PC-9 (cell line): ENCODE measurements at regions of chr16 and their contacts with region 1.

Region 1: DNA sequence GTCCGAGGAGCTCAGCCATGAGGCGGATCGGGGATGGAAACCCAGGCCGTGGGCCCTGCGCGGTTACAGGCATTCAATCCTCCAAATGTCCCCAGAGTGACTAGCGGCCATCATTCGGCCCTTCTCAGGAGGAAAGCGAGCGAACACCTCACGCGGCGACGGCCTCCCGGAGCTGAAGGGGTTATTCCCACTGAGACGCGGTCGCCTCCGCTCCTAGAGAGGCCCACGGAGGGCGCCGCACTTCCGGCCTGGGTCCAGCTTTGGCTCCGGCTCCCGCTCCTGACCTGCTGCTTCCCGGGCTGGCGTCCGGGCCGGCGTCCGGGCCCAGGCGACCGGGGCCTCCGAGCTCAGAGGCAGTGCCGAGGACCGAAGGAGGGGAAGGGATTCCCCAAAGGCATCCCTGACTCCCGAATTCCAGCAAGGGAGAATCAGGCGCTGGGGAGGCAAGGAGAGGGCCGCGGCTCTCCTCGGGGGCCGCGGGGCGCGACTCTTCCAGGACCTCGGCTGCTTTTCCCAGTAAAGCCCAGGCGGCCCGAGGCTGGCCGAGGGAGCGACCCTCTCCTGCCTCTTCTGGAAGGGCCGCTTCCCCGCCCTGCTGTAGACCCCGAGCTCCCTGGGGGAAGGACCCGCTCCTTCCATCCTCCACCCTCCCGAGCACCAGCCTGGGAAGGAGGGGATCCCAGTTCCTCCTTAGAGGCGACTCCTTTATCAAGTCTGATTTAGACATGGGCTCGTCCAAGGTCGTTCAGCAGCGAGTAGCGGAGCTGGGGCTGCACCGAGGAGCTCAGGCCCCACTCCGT is 18.6 kb upstream of the ZNF629 start:
- DNase-seq: peak; percentile 61 to 87
- H3K4me3 ChIP-seq: peak overlapping the region; percentile 78
- H3K27ac ChIP-seq: peak overlapping the region; percentile 60
- H3K4me1 ChIP-seq: peaks cover 12% of the 10 kb centered on the region
- H3K27me3 ChIP-seq: no peaks in the 10 kb centered on the region
- CTCF ChIP-seq: no peak; the same call in 1 of the 2 replicates

Region 2: DNA sequence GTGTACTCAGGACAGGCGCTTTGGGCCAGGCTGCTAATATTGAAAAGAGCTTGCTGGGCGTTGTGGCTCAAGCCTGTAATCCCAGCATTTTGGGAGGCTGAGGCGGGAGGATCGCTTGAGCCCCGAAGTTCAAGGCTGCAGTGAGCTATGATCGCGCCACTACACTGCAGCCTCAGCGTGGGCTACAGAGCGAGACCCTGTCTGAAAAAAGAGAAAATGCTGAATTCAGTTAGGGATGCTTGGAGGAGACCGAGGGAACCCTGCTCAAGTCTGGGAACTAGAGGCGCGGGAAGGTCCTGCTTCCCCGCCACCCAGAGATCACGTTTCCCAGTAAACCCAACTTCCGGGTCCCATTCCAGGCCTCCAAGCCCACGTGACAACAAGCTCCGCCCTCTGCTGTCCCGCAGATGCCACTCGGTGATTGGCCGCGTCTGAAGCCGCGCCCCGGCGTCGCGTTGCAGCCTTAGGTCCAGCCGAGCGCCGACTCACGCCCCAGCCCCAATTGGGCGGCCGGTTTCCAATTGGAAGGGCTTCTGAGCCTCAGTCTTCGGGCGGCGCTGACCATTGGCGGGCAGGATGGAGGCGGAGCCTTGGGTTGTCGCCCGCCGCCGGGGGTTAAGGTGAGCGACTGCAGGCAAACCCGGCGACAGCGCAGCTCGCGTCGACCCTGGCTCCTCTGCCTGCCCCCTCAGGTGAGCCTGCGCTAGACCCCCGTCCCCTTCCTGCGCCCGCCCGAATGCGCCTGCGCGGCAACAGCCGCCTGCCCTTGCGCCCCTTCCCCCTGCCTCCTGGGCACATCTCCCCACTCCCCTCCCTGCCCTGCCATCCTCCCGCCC is 57.6 kb before region 1 on chr16 and contains the start of gene PHKG2:
- CTCF ChIA-PET with region 1: no interaction called
- POLR2A ChIA-PET with region 1: interaction called, 11 read pairs
- intact Hi-C with region 1: no loop called
- DNase-seq: peak; percentile 98 to 100
- H3K4me3 ChIP-seq: peak within 1 kb of the TSS; percentile 75
- H3K27ac ChIP-seq: peak within 1 kb of the TSS; percentile 53
- H3K4me1 ChIP-seq: peaks cover 13% of the 10 kb centered on the region
- H3K27me3 ChIP-seq: no peaks in the 10 kb centered on the region
- CTCF ChIP-seq: no peak
- total RNA-seq, gene PHKG2: 66.1 and 67.3 TPM in 2 replicates

Region 3: DNA sequence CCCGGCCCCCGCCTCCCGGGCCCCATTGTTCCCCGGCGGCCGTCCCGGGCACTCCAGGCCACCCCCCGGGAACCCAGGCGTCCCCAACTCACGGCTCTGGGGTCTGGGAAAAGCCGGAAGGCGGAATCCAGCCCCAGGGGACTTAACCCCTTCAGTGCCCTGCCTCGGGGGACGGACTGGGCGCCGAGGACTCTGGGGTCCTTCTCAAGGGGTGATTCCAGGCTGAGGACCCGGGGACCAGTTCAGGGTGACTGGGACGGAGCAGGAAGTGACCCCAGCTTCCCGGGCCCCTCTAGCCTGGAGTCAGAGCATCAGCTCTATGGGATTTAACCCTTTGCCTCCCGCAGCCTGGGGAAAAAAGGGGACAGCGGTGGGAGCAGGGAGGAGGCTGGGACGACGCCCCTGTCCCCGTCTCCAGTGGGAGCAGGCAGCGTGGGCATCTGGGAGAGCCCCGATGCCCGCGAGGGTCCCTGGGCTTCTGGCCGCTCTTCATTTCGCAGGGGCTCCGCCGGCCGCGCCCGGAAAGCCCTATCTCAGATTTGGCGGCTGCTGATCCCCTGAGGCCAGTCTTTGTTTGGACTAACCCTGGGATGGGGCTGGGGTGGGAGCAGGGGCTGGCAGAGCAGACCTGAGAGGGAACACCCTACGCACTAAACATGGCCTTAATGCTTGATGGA is 18.5 kb before region 1 on chr16 and contains the start of gene ZNF629:
- CTCF ChIA-PET with region 1: interaction called, 8 read pairs
- POLR2A ChIA-PET with region 1: interaction called, 21 read pairs
- intact Hi-C with region 1: loop called (anchors 1 kb)
- DNase-seq: peak; percentile 49 to 75
- H3K4me3 ChIP-seq: peak within 1 kb of the TSS; percentile 97
- H3K27ac ChIP-seq: no peak within 1 kb of the TSS
- H3K4me1 ChIP-seq: peaks cover 14% of the 10 kb centered on the region
- H3K27me3 ChIP-seq: no peaks in the 10 kb centered on the region
- CTCF ChIP-seq: no peak
- total RNA-seq, gene ZNF629: 21.7 and 25.6 TPM in 2 replicates

Region 4: DNA sequence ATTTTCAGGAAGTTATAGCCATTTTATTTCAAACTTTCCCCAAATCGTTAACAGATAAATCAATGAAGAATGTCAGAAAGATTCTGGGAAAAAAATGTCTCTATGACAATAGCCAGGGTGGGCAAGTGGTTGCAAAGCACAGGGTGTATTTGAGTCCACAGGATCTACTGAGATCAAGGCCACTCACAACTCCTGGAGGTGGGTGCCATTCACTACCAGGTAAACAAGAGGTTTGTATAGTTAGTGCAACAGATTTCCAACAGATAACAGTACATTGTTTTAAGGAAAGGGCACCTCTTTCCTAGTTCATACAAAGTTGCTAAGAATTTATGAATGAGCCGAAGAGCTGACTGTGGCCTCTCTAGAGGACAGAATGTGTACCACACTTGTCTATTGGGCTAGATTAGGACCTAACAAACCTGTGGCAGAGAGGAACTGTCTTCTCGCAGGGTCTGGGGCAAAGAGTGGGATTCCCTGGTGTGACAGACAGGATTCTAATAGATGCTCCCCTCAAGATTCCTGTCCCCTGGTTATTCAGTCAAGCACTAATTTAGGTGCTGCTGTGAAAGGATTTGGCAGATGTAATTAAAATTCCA is 33.4 kb after region 1 on chr16:
- CTCF ChIA-PET with region 1: no interaction called
- POLR2A ChIA-PET with region 1: no interaction called
- intact Hi-C with region 1: no loop called
- DNase-seq: no peak
- H3K4me3 ChIP-seq: no peak overlapping the region
- H3K27ac ChIP-seq: no peak overlapping the region
- H3K4me1 ChIP-seq: peaks cover 18% of the 10 kb centered on the region
- H3K27me3 ChIP-seq: no peaks in the 10 kb centered on the region
- CTCF ChIP-seq: no peak

Region 5: GRCh38 chr16:30874821-30875717 is 69.5 kb after region 1 on chr16:
- CTCF ChIA-PET with region 1: no interaction called
- POLR2A ChIA-PET with region 1: no interaction called
- intact Hi-C with region 1: loop called (anchors 2 kb)
- DNase-seq: peak; percentile 75 to 94
- H3K4me3 ChIP-seq: peak overlapping the region; percentile 97
- H3K27ac ChIP-seq: peak overlapping the region; percentile 48
- H3K4me1 ChIP-seq: peaks cover 18% of the 10 kb centered on the region
- H3K27me3 ChIP-seq: no peaks in the 10 kb centered on the region
- CTCF ChIP-seq: no peak